ENCODE measurements at regions of chr16 and their contacts with region 1.

Region 1: GRCh38 chr16:58533751-58534470 is 18.6 kb downstream of the SETD6 start:
- DNase-seq: no peak
- ATAC-seq: peak; percentile 85

Region 2: DNA sequence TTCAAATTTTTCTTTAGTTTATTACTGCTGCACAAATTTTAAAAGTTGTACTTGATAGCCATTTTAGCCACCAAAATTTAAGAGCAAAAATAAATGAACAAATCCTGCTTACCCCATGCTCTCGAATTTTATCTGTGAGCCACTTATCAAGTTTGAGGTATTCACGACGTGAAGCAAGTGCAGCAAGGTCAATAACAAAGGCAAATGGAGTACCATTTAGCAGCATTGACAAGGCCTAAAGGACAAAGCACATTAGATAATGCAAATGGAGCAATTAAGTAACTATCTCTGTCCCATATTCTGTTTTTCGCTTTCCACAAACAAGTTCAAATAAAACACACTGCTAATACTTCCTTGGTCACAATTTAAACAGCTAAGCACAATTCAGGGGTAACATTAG is 41.0 kb after region 1 on chr16:
- intact Hi-C with region 1: loop called (anchors 5 kb)
- DNase-seq: no peak
- ATAC-seq: peak; percentile 43

Region 3: DNA sequence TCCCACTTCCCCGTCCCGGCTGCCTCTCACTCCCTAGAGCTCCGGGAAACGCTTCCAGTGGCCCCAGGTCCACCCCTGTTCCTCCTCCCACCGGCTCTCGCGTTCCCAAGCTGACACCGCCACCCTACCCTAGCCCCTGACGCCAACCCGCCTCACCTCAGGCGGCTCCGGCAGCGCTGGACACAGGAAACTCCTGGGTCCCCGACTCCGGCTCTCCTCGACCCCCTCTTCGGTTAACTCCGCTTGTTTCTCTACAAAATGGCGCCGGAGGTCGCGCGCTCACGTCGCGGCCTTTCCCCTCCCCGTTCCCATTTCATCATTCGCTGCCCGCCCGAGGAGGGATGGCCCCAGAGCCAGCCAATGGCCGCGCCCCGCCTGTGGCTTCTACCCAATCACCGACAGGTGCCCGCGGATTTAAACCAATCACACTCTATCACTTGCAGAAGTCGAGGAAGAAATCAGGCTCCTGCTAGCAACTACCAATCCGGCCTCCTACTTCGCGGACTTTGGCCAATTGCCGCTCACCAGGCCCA is 95.7 kb after region 1 on chr16 and contains the start of gene CNOT1:
- intact Hi-C with region 1: no loop called
- DNase-seq: peak; percentile 99
- ATAC-seq: peak; percentile 94
- total RNA-seq, gene CNOT1: 68.3 TPM

Measured in Right ventricle myocardium superior (tissue), 1 donor.